ENCODE measurements at regions of chr17 and their contacts with region 1.

Region 1: GRCh38 chr17:7219812-7220581 is at the starts of genes ACADVL and DLG4:
- DNase-seq: no peak
- ATAC-seq: peak; percentile 71
- H3K4me3 ChIP-seq: peak within 1 kb of the TSS; percentile 69 to 75
- H3K27ac ChIP-seq: peak within 1 kb of the TSS; percentile 99
- H3K4me1 ChIP-seq: peaks cover 12 to 54% of the 10 kb centered on the region in 2 experiments; a peak in 3 of 4 replicates
- H3K27me3 ChIP-seq: no peaks in the 10 kb centered on the region
- CTCF ChIP-seq: no peak
- POLR2A ChIP-seq: peak; percentile 61
- RAD21 ChIP-seq: no peak
- total RNA-seq, gene ACADVL: 554 TPM
- total RNA-seq, gene DLG4: 15.0 TPM

Region 2: GRCh38 chr17:7234083-7234951 is 14.3 kb after region 1 on chr17 and contains the start of gene DVL2:
- CTCF ChIA-PET with region 1: interaction called, 16 read pairs
- POLR2A ChIA-PET with region 1: interaction called, 19 read pairs
- RAD21 ChIA-PET with region 1: interaction called in 1 of 2 experiments, 7 read pairs
- intact Hi-C with region 1: no loop called
- DNase-seq: peak; percentile 88
- ATAC-seq: peak; percentile 56
- H3K4me3 ChIP-seq: peak within 1 kb of the TSS; percentile 76 to 77
- H3K27ac ChIP-seq: peak within 1 kb of the TSS; percentile 87
- H3K4me1 ChIP-seq: peaks cover 27 to 62% of the 10 kb centered on the region in 2 experiments; a peak in 3 of 4 replicates
- H3K27me3 ChIP-seq: no peaks in the 10 kb centered on the region
- CTCF ChIP-seq: no peak
- POLR2A ChIP-seq: peak; percentile 69
- RAD21 ChIP-seq: no peak
- total RNA-seq, gene DVL2: 69.7 TPM

Region 3: DNA sequence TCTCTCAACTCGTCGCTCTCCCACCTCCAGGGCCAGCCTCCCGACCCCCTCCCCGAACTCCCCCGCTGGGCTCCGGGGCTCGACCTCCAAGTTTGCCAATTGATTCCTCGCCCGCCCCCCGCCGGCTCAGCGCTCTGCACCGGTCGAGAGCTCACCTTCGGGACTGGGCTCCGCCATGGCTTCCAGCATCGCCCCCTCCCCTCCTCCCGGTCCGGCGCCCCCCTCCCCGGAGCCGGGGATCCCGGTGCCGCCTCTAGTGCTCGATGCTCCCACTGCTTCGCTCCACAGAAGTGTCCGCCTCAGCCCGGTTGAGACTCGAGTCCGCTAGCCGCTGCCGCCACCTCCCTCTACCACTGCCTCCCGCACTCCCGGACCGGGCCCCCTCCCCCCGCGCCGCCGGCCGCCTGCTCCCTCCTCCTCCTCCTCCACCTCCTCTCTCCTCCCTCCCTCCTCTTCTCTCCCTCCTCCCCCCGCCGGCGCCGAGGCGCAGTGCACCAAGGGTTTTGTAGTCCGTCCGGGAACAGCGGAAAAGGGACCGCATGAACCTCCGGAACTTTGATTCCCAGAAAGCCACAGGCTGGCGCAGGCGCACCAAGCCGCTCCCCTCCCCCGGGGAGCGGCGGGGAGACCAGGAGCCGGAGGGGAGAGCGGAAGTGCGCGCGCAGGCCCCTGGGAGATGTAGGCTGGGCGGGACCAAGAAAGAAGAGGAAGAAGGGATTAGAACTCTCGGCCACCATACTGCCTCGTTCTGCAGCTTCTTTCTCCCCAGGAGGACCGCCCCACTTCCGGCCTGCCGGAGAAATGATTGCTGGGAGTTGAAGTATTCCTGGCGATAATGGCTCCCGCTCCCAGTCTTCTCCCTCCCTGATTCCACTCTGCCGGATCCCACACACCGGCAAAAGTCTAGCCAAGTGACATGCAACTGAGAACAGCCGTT is 19.4 kb after region 1 on chr17 and contains the start of gene PHF23:
- CTCF ChIA-PET with region 1: interaction called, 16 read pairs
- POLR2A ChIA-PET with region 1: interaction called, 19 read pairs
- RAD21 ChIA-PET with region 1: interaction called, 5 to 7 read pairs
- intact Hi-C with region 1: no loop called
- DNase-seq: peak; percentile 99
- ATAC-seq: peak; percentile 61
- H3K4me3 ChIP-seq: peak within 1 kb of the TSS; percentile 97 to 99
- H3K27ac ChIP-seq: peak within 1 kb of the TSS; percentile 92
- H3K4me1 ChIP-seq: peaks cover 37 to 64% of the 10 kb centered on the region in 2 experiments
- H3K27me3 ChIP-seq: no peaks in the 10 kb centered on the region
- CTCF ChIP-seq: no peak
- POLR2A ChIP-seq: no peak
- RAD21 ChIP-seq: no peak
- total RNA-seq, gene PHF23: 48.5 TPM

Region 4: GRCh38 chr17:7261172-7261927 is 41.4 kb after region 1 on chr17:
- CTCF ChIA-PET with region 1: interaction called, 3 read pairs
- POLR2A ChIA-PET with region 1: interaction called, 15 read pairs
- RAD21 ChIA-PET with region 1: no interaction called
- intact Hi-C with region 1: no loop called
- DNase-seq: no peak
- ATAC-seq: peak; percentile 48
- H3K4me3 ChIP-seq: peak overlapping the region; percentile 98 to 99
- H3K27ac ChIP-seq: peak overlapping the region; percentile 94
- H3K4me1 ChIP-seq: peaks cover 38 to 60% of the 10 kb centered on the region in 2 experiments
- H3K27me3 ChIP-seq: no peaks in the 10 kb centered on the region
- CTCF ChIP-seq: no peak
- POLR2A ChIP-seq: no peak
- RAD21 ChIP-seq: no peak

Region 5: DNA sequence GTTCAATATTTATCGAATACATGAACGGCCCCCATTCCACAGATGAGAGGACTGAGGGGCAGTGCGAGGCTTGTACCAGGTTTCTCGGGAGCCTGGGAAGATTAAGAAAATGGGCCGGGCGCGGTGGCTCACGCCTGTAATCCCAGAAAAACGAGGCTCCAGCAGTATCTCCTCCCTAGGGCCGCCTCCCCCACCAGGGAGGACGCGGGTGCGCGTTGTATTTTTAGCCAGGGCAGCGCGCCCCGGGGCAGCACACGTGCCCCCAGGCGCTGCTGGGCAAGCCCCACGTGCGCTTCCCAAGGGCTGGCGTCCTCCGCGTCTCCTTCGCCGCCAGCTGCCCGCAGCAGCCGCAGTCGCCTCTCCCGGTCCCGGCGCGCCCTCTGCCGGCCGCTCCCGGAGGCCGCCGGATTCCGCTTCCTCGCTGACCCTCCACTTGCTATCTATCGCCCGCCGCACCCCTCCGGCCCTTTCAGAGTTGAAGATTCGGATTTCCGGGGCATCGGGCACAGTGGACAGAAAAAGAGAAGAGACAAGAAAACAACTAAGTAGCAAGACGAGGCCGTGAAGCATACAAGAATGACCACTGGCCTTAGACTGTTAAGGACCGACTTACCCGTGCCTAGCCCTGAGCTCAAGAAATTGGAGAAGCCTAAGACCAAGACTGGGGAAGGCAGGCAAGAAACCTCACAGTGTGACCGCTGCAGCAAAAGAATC is 76.3 kb after region 1 on chr17:
- CTCF ChIA-PET with region 1: interaction called, 37 read pairs
- POLR2A ChIA-PET with region 1: interaction called, 5 read pairs
- RAD21 ChIA-PET with region 1: interaction called, 5 to 7 read pairs
- intact Hi-C with region 1: loop called (anchors 2 kb)
- DNase-seq: peak; percentile 66
- ATAC-seq: peak; percentile 77
- H3K4me3 ChIP-seq: peak overlapping the region; percentile 25 to 33
- H3K27ac ChIP-seq: peak overlapping the region; percentile 37
- H3K4me1 ChIP-seq: peaks cover 17 to 41% of the 10 kb centered on the region in 2 experiments; a peak in 3 of 4 replicates
- H3K27me3 ChIP-seq: no peaks in the 10 kb centered on the region
- CTCF ChIP-seq: peak; percentile 91 to 94 (median 93)
- POLR2A ChIP-seq: no peak
- RAD21 ChIP-seq: peak; percentile 97

Region 6: DNA sequence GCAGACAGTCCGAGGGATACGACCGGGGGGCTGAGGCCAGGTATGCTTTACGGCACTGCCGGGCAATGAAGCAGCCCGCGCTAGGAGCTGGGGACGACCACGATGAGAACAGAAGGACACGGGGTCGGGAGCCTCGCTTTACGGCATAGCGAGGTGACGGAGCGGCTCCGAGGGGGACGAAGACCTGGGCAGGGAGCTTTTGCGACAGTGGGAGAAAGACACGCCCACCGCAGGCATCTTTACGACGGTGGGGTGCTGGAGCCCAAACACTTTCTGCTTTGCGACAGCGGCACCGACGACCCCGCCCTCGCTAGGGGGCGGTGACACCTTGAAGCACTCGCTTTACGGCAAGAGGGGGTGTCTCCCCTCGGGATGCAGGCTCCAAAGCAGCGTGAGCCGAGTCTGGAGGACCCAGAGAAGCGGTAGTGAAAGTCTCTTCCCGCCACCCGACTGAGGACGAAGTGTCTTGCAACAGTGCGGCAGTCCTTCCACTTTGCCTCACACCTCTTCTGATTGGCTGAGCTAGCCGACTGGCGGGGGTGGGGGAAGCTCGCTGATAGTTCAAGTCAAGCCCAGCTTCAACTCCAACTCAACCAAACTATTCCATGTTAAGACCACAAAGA is 109.5 kb after region 1 on chr17:
- CTCF ChIA-PET with region 1: interaction called, 10 read pairs
- POLR2A ChIA-PET with region 1: interaction called, 7 read pairs
- RAD21 ChIA-PET with region 1: no interaction called
- intact Hi-C with region 1: no loop called
- DNase-seq: peak; percentile 99
- ATAC-seq: peak; percentile 78
- H3K4me3 ChIP-seq: peak overlapping the region; percentile 98 to 99
- H3K27ac ChIP-seq: peak overlapping the region; percentile 81
- H3K4me1 ChIP-seq: peaks cover 3 to 29% of the 10 kb centered on the region in 2 experiments; a peak in 3 of 4 replicates
- H3K27me3 ChIP-seq: no peaks in the 10 kb centered on the region
- CTCF ChIP-seq: no peak
- POLR2A ChIP-seq: peak; percentile 29
- RAD21 ChIP-seq: no peak

Region 7: DNA sequence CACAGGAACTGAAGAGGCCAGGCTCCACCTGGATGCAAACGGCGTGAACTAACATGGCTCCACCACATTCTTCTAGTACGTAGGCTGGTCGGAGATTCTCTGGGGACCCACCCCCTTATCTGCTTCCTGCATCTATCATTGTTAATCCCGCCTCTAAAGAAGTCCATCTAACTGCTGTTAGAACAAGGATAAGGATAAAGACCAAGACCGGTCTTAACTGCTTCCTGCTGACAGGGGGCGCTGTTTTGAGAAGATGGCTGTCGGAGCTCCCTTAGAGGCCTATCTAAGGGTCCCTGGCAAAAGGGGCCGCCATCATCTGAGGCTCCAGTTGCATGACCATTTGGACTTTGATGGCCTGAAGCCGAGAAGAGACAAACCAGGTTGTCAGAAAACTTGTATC is 303.0 kb after region 1 on chr17:
- CTCF ChIA-PET with region 1: no interaction called
- POLR2A ChIA-PET with region 1: no interaction called
- RAD21 ChIA-PET with region 1: no interaction called
- intact Hi-C with region 1: no loop called
- DNase-seq: peak; percentile 8
- ATAC-seq: peak; percentile 85
- H3K4me3 ChIP-seq: no peak overlapping the region
- H3K27ac ChIP-seq: no peak overlapping the region
- H3K4me1 ChIP-seq: no peaks in the 10 kb centered on the region
- H3K27me3 ChIP-seq: no peaks in the 10 kb centered on the region
- CTCF ChIP-seq: peak; percentile 22 to 72 (median 52); a peak in 5 of 6 replicates
- POLR2A ChIP-seq: no peak
- RAD21 ChIP-seq: no peak